ENCODE measurements at regions of chr4 and their contacts with region 1.

Region 1: GRCh38 chr4:73662709-73663546 is 42.7 kb upstream of the RASSF6 start:
- DNase-seq: peak; percentile 21
- ATAC-seq: peak; percentile 90
- H3K4me3 ChIP-seq: no peak overlapping the region
- H3K27ac ChIP-seq: no peak overlapping the region
- H3K4me1 ChIP-seq: no peaks in the 10 kb centered on the region
- H3K27me3 ChIP-seq: no peaks in the 10 kb centered on the region
- CTCF ChIP-seq: peak; percentile 40 to 57 (median 55); a peak in 4 of 6 replicates
- POLR2A ChIP-seq: no peak
- RAD21 ChIP-seq: peak; percentile 81

Region 2: DNA sequence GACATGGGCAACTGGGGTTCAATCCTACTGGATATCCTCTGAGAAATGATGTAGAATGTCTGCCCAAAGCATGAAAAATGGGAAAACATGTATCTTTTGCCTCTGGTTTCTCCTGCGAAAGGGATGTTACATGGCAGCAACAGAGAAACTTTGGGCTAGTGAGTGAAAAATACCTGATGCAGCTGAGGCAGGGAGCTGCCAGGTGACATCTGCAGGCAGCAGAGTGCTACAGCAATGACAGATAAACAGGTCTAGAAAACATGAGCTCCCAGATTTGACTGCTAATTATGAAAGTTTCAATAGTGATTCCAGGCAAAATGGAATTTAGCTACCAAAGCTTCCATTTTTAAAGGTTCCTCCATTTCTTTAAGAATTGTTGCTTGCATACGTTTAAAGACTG is 201.4 kb after region 1 on chr4:
- CTCF ChIA-PET with region 1: interaction called, 9 read pairs
- POLR2A ChIA-PET with region 1: no interaction called
- RAD21 ChIA-PET with region 1: interaction called in 1 of 2 experiments, 3 read pairs
- intact Hi-C with region 1: loop called (anchors 2 kb)
- DNase-seq: no peak
- ATAC-seq: peak; percentile 37
- H3K4me3 ChIP-seq: no peak overlapping the region
- H3K27ac ChIP-seq: no peak overlapping the region
- H3K4me1 ChIP-seq: peaks cover 0 to 10% of the 10 kb centered on the region in 2 experiments; a peak in 2 of 4 replicates
- H3K27me3 ChIP-seq: no peaks in the 10 kb centered on the region
- CTCF ChIP-seq: peak; percentile 47 to 71 (median 70); a peak in 5 of 6 replicates
- POLR2A ChIP-seq: no peak
- RAD21 ChIP-seq: peak; percentile 66

Region 3: DNA sequence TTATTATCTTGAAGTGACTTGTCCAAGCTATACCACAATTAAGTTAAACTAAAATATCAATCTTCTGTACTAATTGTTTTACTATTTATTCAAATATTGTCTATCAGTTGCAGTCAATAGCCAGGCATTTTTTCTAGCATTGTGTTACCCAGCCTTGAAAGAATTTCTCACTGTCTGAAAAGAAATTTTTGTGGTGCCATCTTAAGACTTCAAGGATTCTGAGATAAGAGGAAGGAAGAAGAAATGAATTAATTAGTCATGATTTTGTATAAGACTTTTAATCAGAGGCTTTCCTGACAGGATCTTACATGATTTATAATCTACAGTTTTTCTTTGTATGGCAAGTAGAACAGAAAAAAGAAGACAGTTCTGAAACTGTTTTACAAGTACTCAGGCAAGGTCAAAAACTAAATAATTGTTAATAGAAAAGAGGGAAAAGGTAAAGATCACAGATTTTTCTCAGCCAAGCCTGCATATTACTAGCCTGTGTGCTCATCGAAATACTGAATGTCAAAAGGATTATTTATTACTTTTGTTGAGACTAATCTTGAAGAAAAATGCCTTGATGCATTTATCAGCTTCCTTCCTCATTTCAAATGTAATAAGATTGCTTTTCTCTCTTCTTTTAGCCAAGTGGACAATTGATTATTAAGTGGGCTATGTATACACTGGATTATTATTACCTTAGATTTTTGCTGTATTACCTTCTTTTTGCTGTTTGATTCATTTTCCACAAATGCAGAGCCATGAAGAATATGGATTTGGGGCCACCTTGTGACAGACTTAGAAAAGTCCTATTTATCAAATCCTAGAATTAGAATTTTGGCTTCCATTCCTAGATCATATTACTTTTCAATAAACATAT is 260.1 kb after region 1 on chr4:
- CTCF ChIA-PET with region 1: interaction called, 3 read pairs
- POLR2A ChIA-PET with region 1: no interaction called
- RAD21 ChIA-PET with region 1: no interaction called
- intact Hi-C with region 1: loop called (anchors 2 kb)
- DNase-seq: peak; percentile 15
- ATAC-seq: no peak
- H3K4me3 ChIP-seq: no peak overlapping the region
- H3K27ac ChIP-seq: no peak overlapping the region
- H3K4me1 ChIP-seq: no peaks in the 10 kb centered on the region
- H3K27me3 ChIP-seq: no peaks in the 10 kb centered on the region
- CTCF ChIP-seq: peak; percentile 21 to 56 (median 48); a peak in 4 of 6 replicates
- POLR2A ChIP-seq: no peak
- RAD21 ChIP-seq: peak; percentile 80

Measured in HCT116 (cell line).